Gastrocnemius medialis (tissue), 4 donors: ENCODE measurements at regions of chr5 and their contacts with region 1.

Region 1: GRCh38 chr5:172479044-172479783 is 24.9 kb upstream of the SH3PXD2B start:
- DNase-seq: peak; percentile 70 to 77
- ATAC-seq: peak; percentile 95 to 98
- H3K4me3 ChIP-seq: peak overlapping the region in 1 of 4 donors; percentile 13
- H3K27ac ChIP-seq: peak overlapping the region; percentile 45 to 75 (median 64)
- H3K4me1 ChIP-seq: peaks cover 0 to 4% of the 10 kb centered on the region in 2 donors
- H3K27me3 ChIP-seq: no peaks in the 10 kb centered on the region
- CTCF ChIP-seq: peak; percentile 79 to 95 (median 83)
- POLR2A ChIP-seq: no peak

Region 2: DNA sequence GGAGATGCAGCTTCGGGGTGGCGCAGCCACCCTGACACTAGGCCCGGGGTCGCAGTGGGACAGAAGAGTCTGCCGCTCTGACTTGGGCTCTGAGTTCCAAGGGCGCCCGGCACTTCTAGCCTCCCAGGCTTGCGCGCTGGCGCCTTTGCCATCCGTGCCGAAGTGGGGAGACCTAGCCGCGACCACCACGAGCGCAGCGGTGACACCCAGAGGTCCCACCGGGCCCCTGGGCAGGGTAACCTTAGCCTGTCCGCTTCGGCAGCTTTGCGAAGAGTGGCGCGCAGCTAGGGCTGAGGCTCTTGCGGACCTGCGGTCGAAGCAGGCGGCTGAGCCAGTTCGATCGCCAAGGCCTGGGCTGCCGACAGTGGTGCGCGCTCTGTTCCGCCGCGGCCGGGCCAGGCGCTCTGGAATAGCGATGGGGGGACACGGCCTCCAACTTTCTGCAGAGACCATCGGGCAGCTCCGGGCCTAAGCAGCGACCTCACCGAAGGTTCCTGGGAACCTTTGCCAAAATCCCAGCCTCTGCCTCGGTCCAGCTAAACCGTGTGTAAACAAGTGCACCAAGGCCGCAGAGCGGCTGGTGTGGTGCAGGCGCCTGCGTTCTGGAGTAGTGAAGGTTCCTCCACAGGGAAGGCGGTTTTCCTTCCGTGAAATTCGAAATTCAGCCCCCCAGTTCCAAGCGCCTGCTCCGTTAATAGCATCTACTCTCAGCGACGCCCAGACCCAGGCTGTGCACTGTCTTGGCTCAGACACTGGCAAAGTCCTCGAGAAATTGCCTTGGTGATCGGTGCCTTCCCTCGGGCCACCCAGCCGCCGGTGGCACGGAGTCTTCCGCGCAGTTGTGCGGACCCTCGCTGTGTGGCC is 1162.7 kb before region 1 on chr5:
- in situ Hi-C with region 1: no loop called
- intact Hi-C with region 1: no loop called
- DNase-seq: no peak
- ATAC-seq: no peak
- H3K4me3 ChIP-seq: peak overlapping the region; percentile 0 to 39 (median 30)
- H3K27ac ChIP-seq: no peak overlapping the region
- H3K4me1 ChIP-seq: peaks cover 30 to 31% of the 10 kb centered on the region in 2 donors
- H3K27me3 ChIP-seq: peaks cover 76 to 100% (median 83%) of the 10 kb centered on the region in 3 donors
- CTCF ChIP-seq: no peak
- POLR2A ChIP-seq: no peak

Region 3: DNA sequence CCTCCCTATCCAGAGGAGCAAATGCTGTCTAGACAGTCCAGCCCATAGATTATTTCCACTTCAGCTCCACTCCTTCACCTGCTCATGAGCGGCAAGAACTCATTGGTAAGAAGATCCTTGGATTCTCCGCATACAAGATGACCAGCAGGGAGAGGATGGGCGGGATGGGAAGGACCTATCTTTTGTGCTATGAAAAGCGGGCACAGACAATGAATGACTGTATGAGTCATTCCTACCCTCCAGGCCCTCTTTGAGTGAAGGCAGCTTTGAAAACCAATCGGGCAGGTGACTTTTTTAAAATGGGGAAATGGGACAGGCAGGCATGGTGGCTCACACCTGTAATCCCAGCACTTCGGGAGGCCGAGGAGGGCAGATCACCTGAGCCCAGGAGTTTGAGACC is 644.1 kb before region 1 on chr5:
- in situ Hi-C with region 1: no loop called
- intact Hi-C with region 1: no loop called
- DNase-seq: no peak
- ATAC-seq: no peak
- H3K4me3 ChIP-seq: no peak overlapping the region
- H3K27ac ChIP-seq: no peak overlapping the region
- H3K4me1 ChIP-seq: no peaks in the 10 kb centered on the region
- H3K27me3 ChIP-seq: no peaks in the 10 kb centered on the region
- CTCF ChIP-seq: no peak
- POLR2A ChIP-seq: no peak

Region 4: GRCh38 chr5:172223901-172224873 is 255.0 kb before region 1 on chr5:
- in situ Hi-C with region 1: no loop called
- intact Hi-C with region 1: no loop called
- DNase-seq: no peak
- ATAC-seq: no peak
- H3K4me3 ChIP-seq: no peak overlapping the region
- H3K27ac ChIP-seq: no peak overlapping the region
- H3K4me1 ChIP-seq: no peaks in the 10 kb centered on the region
- H3K27me3 ChIP-seq: no peaks in the 10 kb centered on the region
- CTCF ChIP-seq: no peak
- POLR2A ChIP-seq: no peak

Region 5: DNA sequence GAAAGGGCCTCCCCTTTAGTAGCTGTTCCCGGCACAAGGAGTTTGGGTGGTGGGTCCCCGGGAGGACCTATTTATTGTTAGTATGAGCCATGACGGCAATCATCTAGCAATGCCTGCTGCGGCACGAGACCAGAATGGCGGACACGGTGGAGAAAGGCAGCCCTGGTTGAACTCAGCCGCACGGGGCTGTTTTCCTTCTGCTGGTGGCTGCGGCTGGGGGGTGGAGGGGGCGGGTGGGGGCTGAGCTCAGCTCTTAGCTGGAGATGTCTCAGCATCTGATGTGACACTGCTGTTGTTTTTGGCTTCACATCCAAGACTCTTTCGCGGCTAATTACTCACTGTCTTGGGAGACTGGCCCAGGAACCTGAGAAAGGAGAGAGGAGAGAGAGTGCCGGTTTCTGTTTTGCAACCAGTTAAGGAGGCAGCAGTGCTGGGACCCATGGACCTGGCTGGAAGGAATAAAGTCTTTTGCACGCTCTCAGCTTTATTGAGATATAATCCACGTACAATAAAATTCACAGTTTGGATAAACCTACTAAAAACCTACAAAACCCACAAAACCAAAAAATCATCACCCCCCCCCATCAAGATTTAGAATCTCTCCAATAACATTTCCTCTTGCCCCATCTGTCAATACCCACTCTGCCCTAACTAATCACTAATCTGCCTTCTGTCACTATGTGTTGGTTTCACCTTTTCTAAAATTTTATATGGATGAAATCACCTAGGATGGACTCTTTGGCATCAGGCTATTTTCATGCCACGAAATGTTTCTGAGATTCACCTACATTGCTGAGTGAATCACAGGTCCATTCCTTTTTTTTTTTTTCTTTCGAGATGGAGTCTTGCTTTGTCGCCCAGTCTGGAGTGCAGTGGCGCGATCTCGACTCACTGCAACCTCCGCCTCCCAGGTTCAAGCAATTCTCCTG is 80.1 kb after region 1 on chr5:
- in situ Hi-C with region 1: no loop called
- intact Hi-C with region 1: loop called (anchors 5 kb)
- DNase-seq: peak; percentile 49 to 58
- ATAC-seq: peak; percentile 90 to 93
- H3K4me3 ChIP-seq: peak overlapping the region; percentile 23 to 41 (median 34)
- H3K27ac ChIP-seq: peak overlapping the region; percentile 30 to 65 (median 56)
- H3K4me1 ChIP-seq: peaks cover 9 to 18% of the 10 kb centered on the region in 2 donors
- H3K27me3 ChIP-seq: no peaks in the 10 kb centered on the region
- CTCF ChIP-seq: no peak
- POLR2A ChIP-seq: no peak

Region 6: DNA sequence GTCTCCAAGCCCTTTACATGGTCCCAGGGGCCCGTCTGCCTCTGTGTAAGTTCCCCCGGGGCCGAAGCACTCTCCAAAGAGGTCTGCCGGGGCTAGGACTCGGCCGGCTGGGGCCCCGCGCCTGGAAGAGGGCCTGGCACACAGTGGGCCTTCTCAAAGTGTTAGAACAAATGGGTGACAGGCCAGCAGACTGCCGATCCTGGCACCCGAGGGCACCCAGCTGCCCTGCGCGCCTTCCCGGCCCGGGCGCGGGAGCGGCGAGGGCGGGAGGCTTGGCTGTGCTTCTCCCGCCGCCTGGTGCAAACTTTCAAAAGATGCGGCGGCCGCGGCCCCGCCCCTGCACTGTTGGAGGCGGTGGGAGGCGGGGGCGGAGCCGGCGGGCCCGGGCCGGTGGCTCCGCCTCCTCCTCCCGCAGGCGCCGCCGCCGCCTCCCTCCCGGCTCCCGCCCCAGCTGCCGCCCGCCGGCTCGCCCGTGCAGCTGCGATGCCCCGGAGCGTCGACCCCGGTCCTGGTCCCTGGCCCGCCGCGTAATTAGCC is 161.7 kb after region 1 on chr5 and contains the start of gene NEURL1B:
- in situ Hi-C with region 1: no loop called
- intact Hi-C with region 1: loop called (anchors 2 kb)
- DNase-seq: peak; percentile 30 to 52
- ATAC-seq: peak; percentile 68 to 70
- H3K4me3 ChIP-seq: peak within 1 kb of the TSS; percentile 64 to 74 (median 72)
- H3K27ac ChIP-seq: peak within 1 kb of the TSS; percentile 80 to 87 (median 84)
- H3K4me1 ChIP-seq: peaks cover 6 to 11% of the 10 kb centered on the region in 2 donors
- H3K27me3 ChIP-seq: peaks cover 0 to 6% (median 4%) of the 10 kb centered on the region in 3 donors
- CTCF ChIP-seq: peak in 2 of 5 experiments; percentile 19 to 22
- POLR2A ChIP-seq: peak; percentile 24 to 63
- total RNA-seq, gene NEURL1B: 8.7 to 18.8 (median 15.1) TPM

Region 7: DNA sequence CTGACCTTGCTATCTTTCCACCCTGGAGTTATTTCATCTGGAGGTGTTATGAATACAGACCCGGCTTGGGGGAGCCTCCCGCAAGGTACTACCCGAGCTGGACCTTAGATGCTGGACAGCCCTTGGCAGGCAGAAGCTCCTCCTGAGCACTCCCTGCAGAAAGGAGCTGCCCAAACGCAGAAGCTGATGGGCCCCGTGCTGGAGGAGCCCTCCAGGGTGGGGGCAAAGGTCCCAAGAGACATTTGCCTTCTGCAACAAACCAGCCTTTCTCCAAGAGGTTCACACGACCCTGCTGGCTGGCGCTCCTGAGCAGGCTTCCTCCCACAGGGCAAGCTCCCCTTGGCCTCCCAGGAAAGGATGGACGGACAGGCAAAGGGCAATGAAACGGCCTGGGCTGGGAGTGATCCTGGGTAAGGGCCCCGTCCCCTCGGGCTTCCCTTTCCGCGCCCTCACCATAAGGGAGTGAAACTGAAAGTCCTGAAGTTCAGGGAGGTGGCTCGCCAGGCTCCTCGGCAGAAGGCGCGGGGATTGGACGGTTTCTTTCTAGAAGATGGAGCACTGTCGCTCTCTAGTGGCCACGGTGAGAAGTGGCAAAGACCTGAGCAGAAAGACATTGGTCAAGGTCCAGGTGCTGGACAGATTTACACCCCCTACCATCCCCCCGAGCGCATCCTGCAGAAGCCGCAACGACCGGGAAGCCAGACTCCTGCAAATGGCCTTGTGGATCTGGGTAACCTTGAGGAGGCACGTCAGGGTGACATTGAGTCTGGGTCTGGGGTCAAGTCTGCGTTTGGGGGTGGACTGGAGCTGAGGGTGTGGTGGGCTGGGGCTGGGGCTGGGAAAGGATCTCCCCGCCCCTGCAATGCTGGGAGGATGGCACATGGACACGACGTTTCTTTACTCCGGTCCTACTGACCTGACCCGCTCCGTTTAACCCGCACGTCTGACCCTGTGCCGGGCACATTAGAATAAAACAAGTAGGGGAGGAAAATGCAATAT is 218.2 kb after region 1 on chr5:
- in situ Hi-C with region 1: loop called (anchors 5 kb)
- intact Hi-C with region 1: loop called (anchors 1 kb)
- DNase-seq: peak; percentile 77 to 83
- ATAC-seq: peak; percentile 72 to 88
- H3K4me3 ChIP-seq: peak overlapping the region; percentile 68 to 88 (median 71)
- H3K27ac ChIP-seq: peak overlapping the region; percentile 71 to 77 (median 76)
- H3K4me1 ChIP-seq: peaks cover 8 to 25% of the 10 kb centered on the region in 2 donors
- H3K27me3 ChIP-seq: no peaks in the 10 kb centered on the region
- CTCF ChIP-seq: peak; percentile 66 to 92 (median 90)
- POLR2A ChIP-seq: peak in 1 of 2 donors; percentile 31

Region 8: DNA sequence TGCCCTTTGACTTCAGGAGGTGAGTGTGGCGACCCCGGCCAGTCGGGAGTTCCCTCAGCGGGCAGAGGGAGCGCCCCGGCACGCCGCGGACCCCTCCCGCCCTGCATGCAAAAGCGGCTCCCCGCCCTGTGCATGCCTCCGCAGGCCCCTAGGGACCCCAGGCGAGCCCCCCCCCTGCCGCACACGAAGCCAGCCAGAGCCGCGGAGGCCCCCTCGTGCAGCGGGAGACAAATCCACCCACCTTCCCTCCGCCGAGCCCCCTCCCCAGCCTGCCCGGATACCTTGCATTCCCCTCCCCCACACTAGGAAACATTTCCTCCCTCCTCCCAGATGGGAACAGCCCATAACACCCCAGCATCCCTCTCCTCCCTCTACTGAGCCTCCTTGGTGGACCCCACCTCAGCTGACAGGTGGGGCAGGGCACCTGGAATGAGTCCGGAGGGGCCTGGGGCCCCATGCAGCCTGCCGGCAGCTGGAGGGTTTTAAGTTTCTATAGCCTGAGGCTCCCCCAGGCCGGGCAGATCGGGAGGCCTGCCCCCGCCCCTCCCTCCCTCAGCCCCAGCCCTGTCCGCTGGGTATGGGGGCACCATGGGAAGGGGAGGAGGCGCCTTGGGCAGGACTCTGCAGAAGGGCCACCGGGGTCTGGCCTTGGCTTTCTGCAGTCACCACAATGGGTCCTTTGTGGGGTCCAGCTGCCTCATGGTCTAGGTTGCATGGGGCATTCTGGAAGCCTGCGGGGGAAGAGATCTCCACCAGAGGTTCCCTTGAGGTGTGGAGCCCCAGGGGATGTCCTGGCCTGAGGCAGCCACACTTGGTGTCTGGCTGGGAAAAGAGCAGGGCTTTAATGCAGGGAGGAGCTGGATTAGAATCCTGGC is 355.4 kb after region 1 on chr5:
- in situ Hi-C with region 1: no loop called
- intact Hi-C with region 1: no loop called
- DNase-seq: no peak
- ATAC-seq: peak; percentile 17 to 26
- H3K4me3 ChIP-seq: peak overlapping the region; percentile 71 to 97 (median 86)
- H3K27ac ChIP-seq: peak overlapping the region; percentile 83 to 93 (median 87)
- H3K4me1 ChIP-seq: peaks cover 33 to 39% of the 10 kb centered on the region in 2 donors
- H3K27me3 ChIP-seq: no peaks in the 10 kb centered on the region
- CTCF ChIP-seq: no peak
- POLR2A ChIP-seq: no peak

Region 9: DNA sequence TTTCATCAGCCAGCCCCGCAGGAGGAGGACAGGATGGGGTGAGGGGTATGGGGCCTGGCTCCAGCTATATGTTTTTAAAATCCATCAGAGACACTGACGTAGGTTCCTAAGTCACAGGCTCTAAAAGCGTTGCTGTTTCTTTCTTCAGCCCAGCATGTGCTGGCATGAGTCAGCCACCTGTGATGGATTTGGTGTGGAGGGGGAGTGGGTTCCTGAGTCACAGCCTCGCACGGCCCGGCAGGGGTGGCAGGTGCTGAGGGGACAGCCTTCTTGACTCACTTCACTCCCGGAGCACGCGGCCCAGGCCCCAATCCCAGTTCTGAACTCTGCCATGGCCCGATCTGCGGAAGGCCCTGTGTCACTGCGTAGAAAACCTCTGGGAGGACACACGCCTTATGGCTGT is 441.2 kb after region 1 on chr5:
- in situ Hi-C with region 1: loop called in 3 of 4 experiments (anchors 10 to 25 kb)
- intact Hi-C with region 1: no loop called
- DNase-seq: peak; percentile 56 to 65
- ATAC-seq: peak; percentile 60 to 82
- H3K4me3 ChIP-seq: no peak overlapping the region
- H3K27ac ChIP-seq: peak overlapping the region; percentile 41 to 69 (median 62)
- H3K4me1 ChIP-seq: peaks cover 7 to 11% of the 10 kb centered on the region in 2 donors
- H3K27me3 ChIP-seq: no peaks in the 10 kb centered on the region
- CTCF ChIP-seq: no peak
- POLR2A ChIP-seq: no peak